ENCODE measurements at regions of chr5 and their contacts with region 1.

Region 1: GRCh38 chr5:154002093-154002492 is 36.6 kb downstream of the FAM114A2 start:
- DNase-seq: peak in 4 of 5 donors; percentile 34 to 74 (median 62)
- ATAC-seq: peak; percentile 90 to 95 (median 93)
- H3K4me3 ChIP-seq: no peak overlapping the region
- H3K27ac ChIP-seq: peak overlapping the region; percentile 71 to 89 (median 82)
- H3K4me1 ChIP-seq: peaks cover 0 to 27% (median 14%) of the 10 kb centered on the region in 12 donors
- H3K27me3 ChIP-seq: no peaks in the 10 kb centered on the region
- CTCF ChIP-seq: no peak
- POLR2A ChIP-seq: peak in 1 of 2 donors; percentile 23

Region 2: GRCh38 chr5:154038707-154039457 is 36.8 kb after region 1 on chr5 and contains the starts of genes FAM114A2 and MFAP3:
- intact Hi-C with region 1: loop called in 2 of 10 experiments (anchors 2 to 5 kb)
- DNase-seq: peak; percentile 90 to 94 (median 92)
- ATAC-seq: peak; percentile 98 to 100 (median 99)
- H3K4me3 ChIP-seq: peak within 1 kb of the TSS; percentile 45 to 91 (median 77)
- H3K27ac ChIP-seq: peak within 1 kb of the TSS; percentile 77 to 96 (median 88)
- H3K4me1 ChIP-seq: peaks cover 13 to 61% (median 49%) of the 10 kb centered on the region in 12 donors
- H3K27me3 ChIP-seq: no peaks in the 10 kb centered on the region
- CTCF ChIP-seq: peak in 1 of 12 donors; percentile 6
- POLR2A ChIP-seq: peak in 1 of 2 donors; percentile 78
- total RNA-seq, gene FAM114A2: 8.8 to 39.0 (median 33.9) TPM
- total RNA-seq, gene MFAP3: 25.1 to 52.0 (median 38.6) TPM

Region 3: DNA sequence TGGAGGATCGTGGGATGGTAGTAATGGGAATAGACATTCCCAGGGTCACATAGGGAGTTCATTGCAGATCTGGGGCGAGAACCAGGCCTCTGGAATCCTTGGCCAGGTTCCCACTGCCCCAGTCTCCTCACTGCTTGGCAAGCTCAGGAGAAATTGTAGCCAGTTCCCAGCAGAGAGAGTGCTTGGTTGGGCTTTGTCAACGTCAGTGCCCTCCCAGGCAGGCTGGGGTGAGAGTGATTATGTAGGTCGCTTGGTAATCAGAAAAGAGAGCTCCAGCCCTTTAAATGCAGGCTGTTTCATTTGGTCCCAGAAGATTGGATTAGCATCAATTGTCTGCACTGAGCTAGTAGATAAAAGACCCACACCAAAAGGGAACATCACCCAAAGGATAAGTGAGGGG is 136.6 kb after region 1 on chr5:
- intact Hi-C with region 1: no loop called
- DNase-seq: peak; percentile 70 to 84 (median 82)
- ATAC-seq: peak; percentile 92 to 97 (median 94)
- H3K4me3 ChIP-seq: no peak overlapping the region
- H3K27ac ChIP-seq: peak overlapping the region in 11 of 12 donors; percentile 18 to 81 (median 58)
- H3K4me1 ChIP-seq: peaks cover 0 to 52% (median 22%) of the 10 kb centered on the region in 12 donors
- H3K27me3 ChIP-seq: no peaks in the 10 kb centered on the region
- CTCF ChIP-seq: no peak
- POLR2A ChIP-seq: no peak

Measured in heart left ventricle (tissue), 16 donors.